PC-3 (cell line): ENCODE measurements at regions of chr18 and their contacts with region 1.

Region 1: DNA sequence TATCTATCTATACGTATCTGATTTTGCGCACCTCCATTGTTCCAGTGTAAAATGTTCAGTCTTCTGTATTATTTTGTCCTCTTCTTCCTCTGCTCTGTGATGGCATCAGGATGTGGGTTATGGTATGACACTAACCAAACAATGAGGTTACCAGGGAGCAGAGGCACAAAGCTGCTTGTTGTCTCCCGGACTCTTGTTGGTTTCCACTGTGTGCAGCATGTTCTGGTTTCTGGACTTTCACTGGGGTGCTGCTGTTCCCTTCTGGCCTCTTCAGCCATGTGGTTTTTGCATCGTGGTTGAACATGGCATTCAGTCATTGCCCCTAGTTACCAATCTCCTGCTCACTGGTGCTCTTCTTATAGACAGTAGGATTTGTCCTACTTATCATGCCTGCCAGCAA is 665.9 kb downstream of the CBLN2 start:
- DNase-seq: peak; percentile 40
- ATAC-seq: peak; percentile 73
- H3K4me3 ChIP-seq: no peak overlapping the region
- H3K27ac ChIP-seq: no peak overlapping the region
- H3K4me1 ChIP-seq: peaks cover 17% of the 10 kb centered on the region; the same call in 1 of the 2 replicates
- H3K27me3 ChIP-seq: no peaks in the 10 kb centered on the region
- CTCF ChIP-seq: no peak

Region 2: GRCh38 chr18:71529703-71530303 is 348.4 kb before region 1 on chr18:
- CTCF ChIA-PET with region 1: interaction called, 3 read pairs
- POLR2A ChIA-PET with region 1: no interaction called
- intact Hi-C with region 1: loop called (anchors 10 kb)
- DNase-seq: peak; percentile 96
- ATAC-seq: peak; percentile 85
- H3K4me3 ChIP-seq: no peak overlapping the region
- H3K27ac ChIP-seq: peak overlapping the region; percentile 29
- H3K4me1 ChIP-seq: peaks cover 22% of the 10 kb centered on the region
- H3K27me3 ChIP-seq: no peaks in the 10 kb centered on the region
- CTCF ChIP-seq: no peak; the same call in 1 of the 2 replicates

Region 3: GRCh38 chr18:71831039-71831438 is 47.2 kb before region 1 on chr18:
- CTCF ChIA-PET with region 1: no interaction called
- POLR2A ChIA-PET with region 1: no interaction called
- intact Hi-C with region 1: loop called (anchors 5 kb)
- DNase-seq: peak; percentile 86
- ATAC-seq: peak; percentile 98
- H3K4me3 ChIP-seq: no peak overlapping the region
- H3K27ac ChIP-seq: peak overlapping the region; percentile 30
- H3K4me1 ChIP-seq: peaks cover 15% of the 10 kb centered on the region
- H3K27me3 ChIP-seq: no peaks in the 10 kb centered on the region
- CTCF ChIP-seq: no peak

Region 4: GRCh38 chr18:72041313-72042032 is 163.2 kb after region 1 on chr18:
- CTCF ChIA-PET with region 1: no interaction called
- POLR2A ChIA-PET with region 1: no interaction called
- intact Hi-C with region 1: no loop called
- DNase-seq: peak; percentile 2
- ATAC-seq: no peak; the same call in 1 of the 2 replicates
- H3K4me3 ChIP-seq: no peak overlapping the region
- H3K27ac ChIP-seq: no peak overlapping the region
- H3K4me1 ChIP-seq: no peaks in the 10 kb centered on the region
- H3K27me3 ChIP-seq: no peaks in the 10 kb centered on the region
- CTCF ChIP-seq: peak; percentile 41; the same call in 1 of the 2 replicates